A673 (cell line): ENCODE measurements at regions of chr14 and their contacts with region 1.

Region 1: GRCh38 chr14:67446120-67447032 is 34.4 kb upstream of the PLEK2 start:
- DNase-seq: peak; percentile 21
- H3K4me3 ChIP-seq: no peak overlapping the region
- H3K27ac ChIP-seq: no peak overlapping the region
- H3K4me1 ChIP-seq: no peaks in the 10 kb centered on the region
- H3K27me3 ChIP-seq: no peaks in the 10 kb centered on the region
- CTCF ChIP-seq: no peak

Region 2: DNA sequence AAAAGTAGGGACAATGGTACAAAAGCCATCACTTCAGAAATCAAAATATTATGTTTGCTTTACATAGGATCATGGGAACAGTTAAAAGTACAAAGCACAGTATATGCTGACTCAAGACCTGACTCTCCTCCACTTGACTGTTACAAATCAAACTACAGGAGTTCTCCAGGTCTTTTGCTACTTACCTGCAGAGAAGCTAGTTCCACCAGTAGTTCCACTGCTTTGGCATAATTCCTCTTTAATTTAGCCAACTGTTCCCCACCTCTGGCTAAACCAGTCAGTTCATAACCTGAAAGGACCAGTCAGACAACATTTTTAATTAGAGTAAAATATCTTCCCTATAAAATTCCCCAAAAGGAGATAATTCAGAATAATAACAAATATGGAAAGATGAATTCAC is 100.8 kb before region 1 on chr14:
- CTCF ChIA-PET with region 1: no interaction called
- POLR2A ChIA-PET with region 1: interaction called, 23 read pairs
- intact Hi-C with region 1: no loop called
- DNase-seq: no peak
- H3K4me3 ChIP-seq: no peak overlapping the region
- H3K27ac ChIP-seq: no peak overlapping the region
- H3K4me1 ChIP-seq: no peaks in the 10 kb centered on the region
- H3K27me3 ChIP-seq: no peaks in the 10 kb centered on the region
- CTCF ChIP-seq: no peak

Region 3: DNA sequence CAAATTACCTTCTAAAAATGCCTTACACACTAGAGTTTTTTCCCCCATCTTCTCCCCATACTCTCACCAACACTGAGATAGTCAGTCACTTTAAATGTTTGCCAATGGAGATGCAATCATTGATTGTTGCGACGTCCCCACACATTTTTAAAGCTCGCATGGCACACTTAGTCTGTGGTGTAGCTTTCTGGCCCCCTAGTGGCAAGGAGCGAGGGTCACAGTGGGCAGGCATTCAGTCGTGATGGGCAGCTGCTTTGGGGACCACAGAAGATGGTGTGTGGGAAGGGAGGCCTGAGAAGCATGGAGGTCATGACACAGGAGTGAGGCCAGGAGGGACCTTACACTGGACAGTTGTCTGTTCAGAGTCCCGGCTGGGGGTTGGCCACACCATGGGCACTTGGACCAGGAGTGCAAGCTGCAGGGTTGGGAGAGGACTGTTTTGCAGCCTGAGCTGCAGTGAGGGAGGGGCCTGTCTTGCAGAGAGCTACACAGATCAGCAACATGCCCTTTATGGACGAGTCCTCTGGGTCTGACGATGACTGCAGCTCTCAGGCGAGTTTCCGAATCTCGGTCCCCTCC is 125.0 kb after region 1 on chr14:
- CTCF ChIA-PET with region 1: interaction called, 11 read pairs
- POLR2A ChIA-PET with region 1: no interaction called
- intact Hi-C with region 1: no loop called
- DNase-seq: peak; percentile 65
- H3K4me3 ChIP-seq: no peak overlapping the region
- H3K27ac ChIP-seq: no peak overlapping the region
- H3K4me1 ChIP-seq: no peaks in the 10 kb centered on the region
- H3K27me3 ChIP-seq: no peaks in the 10 kb centered on the region
- CTCF ChIP-seq: peak; percentile 95